ENCODE measurements at regions of chr2 and their contacts with region 1.

Region 1: GRCh38 chr2:99154643-99155536 is at the starts of genes LIPT1 and TSGA10:
- DNase-seq: peak; percentile 90 to 97
- ATAC-seq: peak; percentile 89 to 97 (median 93)
- H3K4me3 ChIP-seq: peak within 1 kb of the TSS; percentile 85
- H3K4me3 Mint-ChIP-seq: no peak within 1 kb of the TSS
- H3K27ac ChIP-seq: peak within 1 kb of the TSS; percentile 92
- H3K27ac Mint-ChIP-seq: no peak within 1 kb of the TSS
- H3K4me1 ChIP-seq: peaks cover 15% of the 10 kb centered on the region
- H3K4me1 Mint-ChIP-seq: peaks cover 0 to 48% of the 10 kb centered on the region in 2 donors
- H3K27me3 ChIP-seq: no peaks in the 10 kb centered on the region
- H3K27me3 Mint-ChIP-seq: no peaks in the 10 kb centered on the region
- CTCF ChIP-seq: no peak
- total RNA-seq, gene LIPT1: 12.0 to 21.4 (median 17.3) TPM
- total RNA-seq, gene TSGA10: 8.4 to 16.0 (median 11.5) TPM

Region 2: DNA sequence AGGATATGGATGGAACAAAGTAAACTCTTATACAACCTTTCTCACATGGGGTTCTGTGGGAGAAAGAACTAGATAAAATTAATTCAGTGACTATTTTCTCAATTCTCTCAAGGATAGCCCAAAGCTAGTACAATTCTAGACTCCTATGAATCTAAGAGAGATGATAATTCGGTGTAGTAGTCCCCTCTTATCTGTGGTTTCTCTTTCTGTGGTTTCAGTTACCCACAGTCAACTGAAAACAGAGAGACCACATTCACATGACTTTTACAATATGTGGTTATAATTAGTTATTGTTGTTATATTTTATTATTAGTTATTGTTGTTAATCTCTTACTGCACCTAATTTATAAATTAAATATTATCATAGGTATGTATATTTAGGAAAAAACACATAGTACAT is 66.9 kb before region 1 on chr2:
- intact Hi-C with region 1: no loop called
- DNase-seq: peak in 1 of 2 donors; percentile 44
- ATAC-seq: peak in 1 of 3 donors; percentile 54
- H3K4me3 ChIP-seq: no peak overlapping the region
- H3K4me3 Mint-ChIP-seq: no peak overlapping the region
- H3K27ac ChIP-seq: no peak overlapping the region
- H3K27ac Mint-ChIP-seq: no peak overlapping the region
- H3K4me1 ChIP-seq: no peaks in the 10 kb centered on the region
- H3K4me1 Mint-ChIP-seq: peaks cover 5 to 6% of the 10 kb centered on the region in 2 donors
- H3K27me3 ChIP-seq: peaks cover 5% of the 10 kb centered on the region
- H3K27me3 Mint-ChIP-seq: peaks cover 35 to 60% of the 10 kb centered on the region in 2 donors
- CTCF ChIP-seq: no peak

Region 3: DNA sequence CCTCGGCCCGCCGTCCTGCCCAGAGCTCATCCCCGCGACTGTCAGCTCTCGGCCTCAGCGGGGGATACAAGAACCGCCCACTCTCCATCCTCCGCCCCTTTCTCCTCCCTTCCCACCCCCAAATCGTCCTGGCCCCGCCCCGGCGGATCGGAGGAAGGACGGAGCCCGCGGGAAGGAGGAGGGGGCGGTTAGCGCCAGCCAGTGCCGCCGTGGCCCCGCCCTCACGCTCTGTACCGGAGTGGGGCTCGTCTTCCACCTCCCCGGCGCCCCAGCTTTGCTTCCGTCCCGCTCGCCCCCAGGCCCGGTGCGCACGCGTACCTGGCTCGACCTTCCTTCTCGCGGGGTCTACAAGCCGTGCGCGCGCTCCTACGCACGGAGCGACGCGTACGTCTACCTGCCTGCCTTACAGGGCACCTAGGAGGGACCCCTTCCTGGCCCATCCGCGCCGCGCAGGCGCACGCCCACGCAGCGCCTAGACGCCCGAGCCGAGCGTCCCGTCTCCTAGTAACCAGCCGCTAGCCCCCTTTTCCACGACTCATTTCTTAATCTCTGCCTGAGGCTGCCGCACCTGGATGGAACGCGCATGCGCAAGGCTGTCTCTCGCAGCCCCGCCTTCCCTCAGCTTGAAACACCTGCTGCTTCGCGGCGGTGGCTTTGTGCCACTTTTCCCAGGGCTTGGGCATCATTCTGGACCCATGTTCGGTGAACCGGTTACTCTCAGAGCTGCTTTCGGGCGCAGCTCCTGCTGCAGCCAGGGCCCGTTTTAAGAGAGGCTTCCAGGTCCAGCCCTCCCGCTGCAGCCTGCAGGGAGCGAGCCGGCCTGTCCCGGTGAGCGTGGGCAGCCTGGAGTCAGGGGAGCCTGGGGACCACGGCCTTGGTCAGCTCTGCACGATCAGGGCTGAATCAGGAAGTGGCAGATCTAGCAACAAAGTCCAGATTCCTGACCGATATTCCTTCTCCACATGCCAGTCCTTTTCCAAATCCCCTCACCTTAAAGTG is 13.5 kb before region 1 on chr2 and contains the start of gene C2orf15:
- intact Hi-C with region 1: loop called (anchors 1 kb)
- DNase-seq: peak; percentile 85 to 98
- ATAC-seq: peak; percentile 89 to 97 (median 91)
- H3K4me3 ChIP-seq: peak within 1 kb of the TSS; percentile 96
- H3K4me3 Mint-ChIP-seq: peak within 1 kb of the TSS; percentile 97
- H3K27ac ChIP-seq: peak within 1 kb of the TSS; percentile 95
- H3K27ac Mint-ChIP-seq: peak within 1 kb of the TSS; percentile 96 to 100
- H3K4me1 ChIP-seq: peaks cover 9% of the 10 kb centered on the region
- H3K4me1 Mint-ChIP-seq: peaks cover 23 to 25% of the 10 kb centered on the region in 2 donors
- H3K27me3 ChIP-seq: no peaks in the 10 kb centered on the region
- H3K27me3 Mint-ChIP-seq: no peaks in the 10 kb centered on the region
- CTCF ChIP-seq: no peak
- total RNA-seq, gene C2orf15: 1.3 to 2.6 (median 1.9) TPM

Region 4: DNA sequence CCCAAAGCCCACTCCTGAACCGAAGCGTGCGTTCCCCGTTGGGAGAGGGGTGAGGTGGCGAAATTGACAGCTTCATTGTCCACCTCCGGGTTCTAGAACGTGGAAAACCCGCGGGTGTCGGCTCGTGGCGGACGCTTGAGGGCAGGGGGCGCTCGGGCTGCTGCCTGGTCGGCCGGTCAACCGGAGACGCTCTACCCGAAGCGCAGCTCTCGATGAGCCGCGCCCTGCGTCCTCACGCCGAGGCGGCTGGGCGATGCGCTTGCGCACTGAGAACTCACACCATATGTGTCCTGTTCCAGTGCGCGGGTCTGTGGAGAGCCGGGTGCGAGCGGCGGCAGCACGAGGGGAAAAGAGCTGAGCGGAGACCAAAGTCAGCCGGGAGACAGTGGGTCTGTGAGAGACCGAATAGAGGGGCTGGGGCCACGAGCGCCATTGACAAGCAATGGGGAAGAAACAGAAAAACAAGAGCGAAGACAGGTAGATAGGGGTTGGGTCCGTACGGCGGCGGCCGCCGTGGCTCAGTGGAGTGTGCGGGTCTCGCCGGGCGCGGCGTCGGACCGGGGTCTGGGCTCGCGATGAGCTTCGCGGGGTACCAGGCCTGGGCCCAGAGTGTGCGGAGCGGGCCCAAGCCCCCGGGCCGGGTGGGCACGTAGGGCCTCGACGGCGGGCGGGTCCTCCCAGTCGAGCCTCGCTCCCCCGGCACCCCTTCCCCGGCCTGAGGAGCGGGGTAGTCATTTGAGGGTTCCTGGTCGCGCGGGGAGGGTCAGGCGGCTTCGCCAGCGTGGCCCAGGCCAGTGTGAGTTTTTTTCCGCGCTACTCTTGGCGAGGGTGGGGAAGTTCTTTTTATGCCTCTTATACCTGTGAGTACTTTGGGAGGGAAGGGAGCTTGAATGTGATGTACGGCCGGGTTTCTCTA is 182.5 kb after region 1 on chr2 and contains the start of gene EIF5B:
- intact Hi-C with region 1: loop called (anchors 2 kb)
- DNase-seq: peak; percentile 86 to 96
- ATAC-seq: peak; percentile 67 to 83 (median 72)
- H3K4me3 ChIP-seq: peak within 1 kb of the TSS; percentile 79
- H3K4me3 Mint-ChIP-seq: no peak within 1 kb of the TSS
- H3K27ac ChIP-seq: peak within 1 kb of the TSS; percentile 83
- H3K27ac Mint-ChIP-seq: no peak within 1 kb of the TSS
- H3K4me1 ChIP-seq: peaks cover 15% of the 10 kb centered on the region
- H3K4me1 Mint-ChIP-seq: peaks cover 12 to 32% of the 10 kb centered on the region in 2 donors
- H3K27me3 ChIP-seq: no peaks in the 10 kb centered on the region
- H3K27me3 Mint-ChIP-seq: no peaks in the 10 kb centered on the region
- CTCF ChIP-seq: peak; percentile 48
- total RNA-seq, gene EIF5B: 33.5 to 40.6 (median 40.3) TPM

Measured in natural killer cell (primary cell).